ENCODE measurements at regions of chr6 and their contacts with region 1.

Region 1: DNA sequence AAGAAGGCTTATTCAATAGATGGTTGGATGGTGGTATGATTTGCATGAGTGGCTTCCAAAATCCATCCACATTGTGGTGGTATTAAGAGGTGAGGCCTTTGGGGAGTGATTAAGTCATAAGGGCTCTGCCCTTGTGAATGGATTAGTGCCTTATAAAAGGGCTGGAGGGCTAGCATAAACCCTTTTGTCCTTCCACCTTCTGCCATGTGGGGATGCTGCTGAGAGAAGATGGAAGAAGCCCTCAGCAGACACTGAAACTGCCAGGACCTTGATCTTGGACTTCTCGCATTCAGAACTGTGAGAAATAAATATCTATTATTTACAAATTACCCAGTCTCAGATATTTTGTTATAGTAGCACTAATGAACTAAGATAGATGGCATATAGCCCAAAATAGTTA is 27.8 kb upstream of the SRPK1 start:
- DNase-seq: peak; percentile 9
- H3K4me3 Mint-ChIP-seq: no peak overlapping the region
- H3K27ac Mint-ChIP-seq: no peak overlapping the region
- H3K4me1 Mint-ChIP-seq: peaks cover 11% of the 10 kb centered on the region
- H3K27me3 Mint-ChIP-seq: no peaks in the 10 kb centered on the region

Region 2: DNA sequence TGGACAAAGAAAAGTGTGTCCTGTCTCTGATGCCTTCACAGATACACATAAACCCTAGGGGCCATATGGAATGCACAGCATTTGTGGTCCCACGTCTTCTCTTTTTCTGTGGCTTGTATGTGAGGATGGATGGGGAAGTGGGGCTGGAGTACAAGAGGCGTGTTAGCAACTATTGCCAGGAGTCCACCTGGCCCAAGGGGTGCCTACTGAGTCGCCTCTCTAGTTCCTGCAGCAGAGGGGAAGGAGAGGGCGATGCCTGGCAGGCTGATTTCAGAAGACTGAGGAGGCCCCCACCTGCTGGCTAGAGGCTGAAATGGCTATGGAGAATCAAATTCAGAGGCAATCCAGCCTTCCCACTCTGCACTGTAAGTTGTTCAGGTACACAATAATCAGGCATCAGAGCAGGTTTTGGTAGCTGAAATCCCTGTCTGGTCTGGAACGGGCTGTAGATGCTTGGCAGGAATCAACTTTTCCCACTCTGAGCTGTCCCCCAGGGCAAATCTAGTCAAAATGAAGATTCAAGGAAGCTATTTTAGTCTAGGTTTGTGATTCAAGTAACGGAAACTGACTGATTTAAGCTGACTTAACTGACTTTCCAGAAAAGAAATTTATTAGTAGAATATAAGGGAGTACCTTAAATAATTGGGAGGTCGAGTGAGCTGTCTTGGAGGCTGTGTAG is 621.2 kb before region 1 on chr6:
- CTCF ChIA-PET with region 1: no interaction called
- intact Hi-C with region 1: no loop called
- DNase-seq: peak; percentile 91
- H3K4me3 Mint-ChIP-seq: no peak overlapping the region
- H3K27ac Mint-ChIP-seq: peak overlapping the region; percentile 70
- H3K4me1 Mint-ChIP-seq: peaks cover 19% of the 10 kb centered on the region
- H3K27me3 Mint-ChIP-seq: no peaks in the 10 kb centered on the region

Region 3: GRCh38 chr6:35920793-35921732 is 27.7 kb before region 1 on chr6 and contains the start of gene SRPK1:
- CTCF ChIA-PET with region 1: interaction called, 3 read pairs
- intact Hi-C with region 1: loop called (anchors 1 kb)
- DNase-seq: peak; percentile 92
- H3K4me3 Mint-ChIP-seq: peak within 1 kb of the TSS; percentile 99
- H3K27ac Mint-ChIP-seq: peak within 1 kb of the TSS; percentile 98
- H3K4me1 Mint-ChIP-seq: peaks cover 46% of the 10 kb centered on the region
- H3K27me3 Mint-ChIP-seq: no peaks in the 10 kb centered on the region
- total RNA-seq, gene SRPK1: 126 to 127 TPM

Region 4: GRCh38 chr6:36735110-36736071 is 786.7 kb after region 1 on chr6:
- CTCF ChIA-PET with region 1: no interaction called
- intact Hi-C with region 1: no loop called
- DNase-seq: peak; percentile 87
- H3K4me3 Mint-ChIP-seq: peak overlapping the region; percentile 59
- H3K27ac Mint-ChIP-seq: peak overlapping the region; percentile 91
- H3K4me1 Mint-ChIP-seq: peaks cover 28% of the 10 kb centered on the region
- H3K27me3 Mint-ChIP-seq: no peaks in the 10 kb centered on the region

Measured in activated naive CD4-positive, alpha-beta T cell treated with anti-CD3 and anti-CD28 coated beads for 36 hours (primary cell).